Caco-2 (cell line): ENCODE measurements at regions of chr7 and their contacts with region 1.

Region 1: DNA sequence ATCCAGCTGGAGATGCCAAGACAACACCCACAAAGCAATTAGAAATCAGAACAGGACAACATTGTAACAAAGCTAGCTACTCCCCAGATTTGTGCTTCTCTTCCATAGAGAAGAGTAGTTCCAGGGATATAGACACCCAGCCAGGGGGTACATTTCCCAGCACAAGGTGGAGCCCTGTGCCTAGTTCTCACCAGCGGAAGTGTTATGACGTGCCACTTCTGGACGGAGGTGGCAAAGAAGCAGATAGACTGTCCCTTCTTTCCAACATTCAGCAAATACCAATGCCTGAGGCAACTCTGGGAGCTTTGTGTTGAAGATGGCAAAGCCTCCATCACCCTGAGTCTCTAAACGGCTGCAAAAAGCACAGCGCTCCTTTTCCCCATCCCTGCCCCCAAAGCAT is 23.4 kb upstream of the GSAP start:
- DNase-seq: peak; percentile 74 to 77
- H3K4me3 ChIP-seq: no peak overlapping the region
- H3K4me3 Mint-ChIP-seq: no peak overlapping the region
- H3K27ac Mint-ChIP-seq: no peak overlapping the region
- H3K4me1 ChIP-seq: 0 out of 2 replicates have a peak, but pooled peaks cover 4% of the 10 kb centered on the region
- H3K4me1 Mint-ChIP-seq: peaks cover 12% of the 10 kb centered on the region
- H3K27me3 ChIP-seq: no peaks in the 10 kb centered on the region
- H3K27me3 Mint-ChIP-seq: no peaks in the 10 kb centered on the region
- CTCF ChIP-seq: peak; percentile 64 to 65

Region 2: DNA sequence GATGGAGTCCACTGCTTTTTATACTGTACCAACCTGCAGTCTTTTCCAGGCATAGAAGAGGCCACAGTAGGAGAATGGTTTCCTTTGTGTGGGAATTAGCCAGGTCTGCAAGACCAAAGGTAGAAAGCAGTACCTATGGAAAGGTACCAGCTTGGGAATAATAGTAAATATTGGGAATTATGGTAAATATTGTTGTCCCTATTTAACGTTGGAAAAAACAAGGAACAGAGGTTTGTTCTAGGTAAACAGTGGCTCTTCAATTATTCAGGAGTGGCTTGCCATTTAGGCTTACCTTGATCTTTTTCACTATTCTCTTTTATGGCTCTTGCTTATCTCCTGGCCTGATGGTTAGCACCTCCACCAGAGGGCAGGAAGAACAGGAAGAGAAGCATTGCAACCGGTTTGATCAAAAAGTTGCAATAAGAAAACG is 20.5 kb after region 1 on chr7:
- CTCF ChIA-PET with region 1: no interaction called
- POLR2A ChIA-PET with region 1: no interaction called
- intact Hi-C with region 1: no loop called
- DNase-seq: peak; percentile 53 to 62
- H3K4me3 ChIP-seq: no peak overlapping the region
- H3K4me3 Mint-ChIP-seq: no peak overlapping the region
- H3K27ac Mint-ChIP-seq: no peak overlapping the region
- H3K4me1 ChIP-seq: peaks cover 34% of the 10 kb centered on the region
- H3K4me1 Mint-ChIP-seq: peaks cover 25% of the 10 kb centered on the region
- H3K27me3 ChIP-seq: no peaks in the 10 kb centered on the region
- H3K27me3 Mint-ChIP-seq: no peaks in the 10 kb centered on the region
- CTCF ChIP-seq: peak; percentile 36 to 56

Region 3: GRCh38 chr7:77649716-77650349 is 210.3 kb after region 1 on chr7:
- CTCF ChIA-PET with region 1: no interaction called
- POLR2A ChIA-PET with region 1: no interaction called
- intact Hi-C with region 1: loop called (anchors 1 kb)
- DNase-seq: peak in 1 of 2 experiments; percentile 49
- H3K4me3 ChIP-seq: no peak overlapping the region
- H3K4me3 Mint-ChIP-seq: peak overlapping the region; percentile 35
- H3K27ac Mint-ChIP-seq: peak overlapping the region; percentile 61
- H3K4me1 ChIP-seq: peaks cover 33% of the 10 kb centered on the region
- H3K4me1 Mint-ChIP-seq: peaks cover 16% of the 10 kb centered on the region
- H3K27me3 ChIP-seq: no peaks in the 10 kb centered on the region
- H3K27me3 Mint-ChIP-seq: no peaks in the 10 kb centered on the region
- CTCF ChIP-seq: no peak

Region 4: GRCh38 chr7:77684030-77684429 is 244.5 kb after region 1 on chr7:
- CTCF ChIA-PET with region 1: no interaction called
- POLR2A ChIA-PET with region 1: no interaction called
- intact Hi-C with region 1: no loop called
- DNase-seq: peak; percentile 33 to 46
- H3K4me3 ChIP-seq: no peak overlapping the region
- H3K4me3 Mint-ChIP-seq: no peak overlapping the region
- H3K27ac Mint-ChIP-seq: peak overlapping the region; percentile 4
- H3K4me1 ChIP-seq: peaks cover 57% of the 10 kb centered on the region
- H3K4me1 Mint-ChIP-seq: peaks cover 38% of the 10 kb centered on the region
- H3K27me3 ChIP-seq: no peaks in the 10 kb centered on the region
- H3K27me3 Mint-ChIP-seq: no peaks in the 10 kb centered on the region
- CTCF ChIP-seq: no peak

Region 5: DNA sequence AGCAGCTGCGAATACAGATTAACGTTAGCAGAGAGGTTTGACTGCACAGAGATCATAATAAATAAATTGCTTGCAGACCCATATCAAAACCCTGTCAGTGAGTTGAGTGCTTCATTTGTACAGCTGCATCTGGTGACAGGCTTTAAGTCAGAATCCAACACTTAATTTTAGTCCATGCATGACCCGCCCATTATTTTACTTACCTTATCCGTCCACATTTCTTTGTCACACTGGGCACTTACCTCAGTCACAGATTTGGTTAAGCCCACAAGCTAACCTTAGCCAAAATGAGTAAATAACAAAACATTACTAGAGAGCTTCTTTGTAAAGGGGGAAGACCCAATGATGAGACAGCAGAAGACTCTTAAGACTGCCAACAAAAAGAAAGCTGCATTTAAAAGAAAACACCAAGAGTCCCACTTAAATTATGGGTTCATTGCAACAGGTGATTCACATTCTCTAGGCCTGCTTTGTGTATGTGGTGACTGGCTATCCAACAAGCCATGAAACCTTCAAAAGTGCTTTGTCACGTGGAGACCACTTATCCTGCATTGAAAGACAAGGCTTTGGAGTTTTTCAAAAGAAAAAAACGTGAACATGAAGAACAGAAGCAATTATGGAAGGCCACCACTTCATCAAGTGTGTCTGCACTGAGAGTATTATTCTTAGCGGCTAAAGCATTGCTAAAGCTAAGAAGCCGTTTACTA is 391.2 kb after region 1 on chr7:
- CTCF ChIA-PET with region 1: no interaction called
- POLR2A ChIA-PET with region 1: no interaction called
- intact Hi-C with region 1: no loop called
- DNase-seq: no peak
- H3K4me3 ChIP-seq: no peak overlapping the region
- H3K4me3 Mint-ChIP-seq: no peak overlapping the region
- H3K27ac Mint-ChIP-seq: no peak overlapping the region
- H3K4me1 ChIP-seq: peaks cover 19% of the 10 kb centered on the region
- H3K4me1 Mint-ChIP-seq: peaks cover 27% of the 10 kb centered on the region
- H3K27me3 ChIP-seq: no peaks in the 10 kb centered on the region
- H3K27me3 Mint-ChIP-seq: no peaks in the 10 kb centered on the region
- CTCF ChIP-seq: no peak